Aorta (tissue), 5 donors: ENCODE measurements at regions of chr10 and their contacts with region 1.

Region 1: GRCh38 chr10:61842755-61843497 is 58.6 kb upstream of the ARID5B start:
- DNase-seq: no peak
- ATAC-seq: no peak
- H3K4me3 ChIP-seq: no peak overlapping the region
- H3K27ac ChIP-seq: no peak overlapping the region
- H3K4me1 ChIP-seq: peaks cover 0 to 2% of the 10 kb centered on the region in 2 donors
- H3K27me3 ChIP-seq: no peaks in the 10 kb centered on the region

Region 2: DNA sequence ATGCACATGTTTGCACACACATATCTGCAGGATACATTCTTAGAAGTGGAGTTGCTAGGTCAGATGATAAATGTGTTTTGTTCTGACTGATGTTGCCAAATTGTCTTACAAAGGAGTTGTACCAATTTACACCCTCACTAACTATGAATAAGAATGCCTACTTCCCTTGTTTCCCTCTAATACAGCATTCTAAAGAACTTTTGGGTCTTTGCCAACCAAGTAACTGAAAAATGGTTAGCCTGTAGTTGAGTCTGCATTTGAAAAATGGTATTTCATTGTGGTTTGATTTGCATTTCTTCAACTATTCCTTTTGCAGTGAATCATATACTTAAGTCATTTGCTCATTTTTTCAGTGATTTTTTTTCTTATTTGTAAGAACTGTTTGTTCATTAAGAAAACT is 438.2 kb before region 1 on chr10:
- intact Hi-C with region 1: loop called in 1 of 2 experiments (anchors 10 kb)
- DNase-seq: no peak
- ATAC-seq: no peak
- H3K4me3 ChIP-seq: no peak overlapping the region
- H3K27ac ChIP-seq: no peak overlapping the region
- H3K4me1 ChIP-seq: peaks cover 0 to 2% of the 10 kb centered on the region in 2 donors
- H3K27me3 ChIP-seq: no peaks in the 10 kb centered on the region

Region 3: DNA sequence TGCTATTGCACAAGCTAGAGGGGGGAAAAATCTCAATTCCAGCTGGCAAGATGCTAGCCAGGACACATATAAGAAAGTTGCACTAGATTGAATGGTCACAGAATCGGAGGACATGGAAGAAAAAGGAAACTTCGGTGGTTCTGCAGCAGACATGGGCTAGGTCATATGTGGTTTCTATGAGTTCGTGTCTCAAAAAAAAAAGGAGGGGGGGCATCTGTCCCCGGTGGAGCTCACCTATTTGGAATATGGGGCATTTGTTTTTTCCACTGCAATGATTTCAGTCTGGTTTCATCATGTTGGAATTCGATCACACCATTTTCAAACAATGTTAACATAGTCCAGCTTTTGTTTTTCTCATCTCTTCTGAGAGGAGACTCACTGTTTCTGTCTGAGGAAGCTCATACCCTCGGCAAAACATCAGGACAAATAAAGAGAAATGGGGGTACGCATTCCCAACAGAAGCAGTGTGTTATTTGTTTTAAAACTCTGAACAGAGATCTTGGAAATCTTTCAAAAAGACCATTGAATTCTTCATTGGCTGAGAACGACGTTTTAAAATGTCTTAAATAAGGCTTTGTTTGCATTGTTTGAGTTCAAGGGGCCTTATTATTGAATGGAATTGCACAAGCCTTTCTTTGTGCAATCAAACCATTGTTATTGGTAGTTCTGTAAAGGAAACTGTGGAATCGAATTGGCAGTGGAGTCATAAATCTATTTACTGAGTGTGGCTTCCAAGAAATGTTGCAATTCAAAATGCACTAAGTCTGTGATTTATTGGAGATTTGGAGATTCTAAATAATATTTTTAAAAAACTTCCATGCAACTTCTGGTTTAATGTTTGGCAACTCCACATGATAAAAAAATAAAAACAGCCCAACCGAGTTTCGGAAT is 252.5 kb after region 1 on chr10:
- intact Hi-C with region 1: no loop called
- DNase-seq: no peak
- ATAC-seq: peak; percentile 64
- H3K4me3 ChIP-seq: no peak overlapping the region
- H3K27ac ChIP-seq: peak overlapping the region in 1 of 2 donors; percentile 58
- H3K4me1 ChIP-seq: peaks cover 0 to 17% of the 10 kb centered on the region in 2 donors
- H3K27me3 ChIP-seq: no peaks in the 10 kb centered on the region